CD14-positive monocyte (primary cell): ENCODE measurements at regions of chr6 and their contacts with region 1.

Region 1: DNA sequence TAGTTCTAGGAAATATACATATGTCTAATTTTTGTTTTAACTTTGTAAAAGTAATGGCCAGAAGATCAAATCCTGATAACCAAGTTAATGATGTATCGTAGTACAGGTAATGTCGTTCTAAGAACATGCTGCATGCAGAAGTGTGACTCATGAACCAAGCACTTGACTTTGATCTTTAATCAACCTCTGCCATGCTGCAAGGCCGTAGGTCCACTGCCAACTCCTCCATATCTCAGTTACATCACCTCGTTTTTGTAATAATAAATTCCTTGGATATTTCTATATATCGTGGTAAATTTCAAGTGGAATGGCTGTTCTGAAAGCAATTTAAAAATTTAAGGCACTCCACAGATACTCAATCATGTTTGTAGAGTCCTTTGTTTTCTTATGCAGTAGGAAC is 771.7 kb downstream of the EPHA7 start:
- DNase-seq: no peak
- H3K4me3 ChIP-seq: no peak overlapping the region
- H3K4me3 Mint-ChIP-seq: no peak overlapping the region
- H3K27ac ChIP-seq: no peak overlapping the region
- H3K27ac Mint-ChIP-seq: no peak overlapping the region
- H3K4me1 ChIP-seq: no peaks in the 10 kb centered on the region
- H3K4me1 Mint-ChIP-seq: peaks cover 2% of the 10 kb centered on the region
- H3K27me3 ChIP-seq: no peaks in the 10 kb centered on the region
- H3K27me3 Mint-ChIP-seq: peaks cover 0 to 2% (median 0%) of the 10 kb centered on the region in 3 donors
- CTCF ChIP-seq: no peak

Region 2: DNA sequence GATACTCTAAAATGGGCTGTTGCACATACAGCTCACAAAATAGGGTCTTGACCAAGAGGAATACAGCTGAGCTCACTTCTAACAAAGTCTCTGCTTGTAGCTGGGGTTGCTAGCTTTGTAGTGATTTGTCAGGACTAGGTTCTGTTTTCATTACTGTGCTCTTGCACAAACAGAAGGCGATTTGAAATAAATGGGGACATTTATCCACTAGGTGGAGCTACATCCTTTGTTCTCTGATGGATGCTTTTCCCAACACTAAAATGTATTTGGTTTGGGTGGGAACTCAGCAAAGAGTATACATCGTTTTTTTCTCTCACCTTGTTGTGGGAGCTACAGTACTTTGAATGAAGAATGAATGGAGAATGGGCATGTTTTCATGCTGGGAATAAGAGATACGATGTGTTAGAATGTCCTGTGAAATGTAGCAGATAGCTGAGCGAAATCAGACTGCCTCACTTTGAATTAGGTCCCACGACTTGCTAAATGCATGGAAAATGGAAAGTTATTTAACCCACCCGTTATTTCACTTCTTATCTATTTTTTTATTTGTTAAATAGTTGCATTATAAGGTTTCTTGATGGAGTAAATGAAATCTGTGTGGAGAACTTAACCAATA is 1566.1 kb before region 1 on chr6:
- intact Hi-C with region 1: loop called in 1 of 2 experiments (anchors 5 kb)
- DNase-seq: peak in 1 of 3 donors; percentile 10
- H3K4me3 ChIP-seq: no peak overlapping the region
- H3K4me3 Mint-ChIP-seq: no peak overlapping the region
- H3K27ac ChIP-seq: no peak overlapping the region
- H3K27ac Mint-ChIP-seq: no peak overlapping the region
- H3K4me1 ChIP-seq: no peaks in the 10 kb centered on the region
- H3K4me1 Mint-ChIP-seq: no peaks in the 10 kb centered on the region
- H3K27me3 ChIP-seq: no peaks in the 10 kb centered on the region
- H3K27me3 Mint-ChIP-seq: peaks cover 0 to 2% (median 0%) of the 10 kb centered on the region in 3 donors
- CTCF ChIP-seq: peak; percentile 72

Region 3: DNA sequence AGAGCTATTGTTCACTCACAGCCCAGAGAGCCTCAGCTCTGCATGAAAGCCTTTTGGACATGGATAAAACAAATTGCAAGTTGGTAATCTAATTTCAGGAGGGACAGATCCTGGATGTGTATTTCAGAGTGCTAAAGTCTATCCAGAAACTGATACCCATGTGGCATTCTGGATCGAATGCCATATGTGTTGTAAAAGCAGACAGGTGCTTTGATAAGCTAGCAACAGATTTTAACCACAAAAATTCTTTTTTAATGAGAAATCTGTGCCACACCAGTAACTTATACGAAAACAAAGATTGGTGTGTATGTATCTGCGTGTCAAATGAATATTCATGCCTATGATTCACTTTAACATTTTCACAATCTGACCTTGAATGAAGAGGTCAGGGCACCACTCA is 1124.1 kb before region 1 on chr6:
- intact Hi-C with region 1: no loop called
- DNase-seq: no peak
- H3K4me3 ChIP-seq: no peak overlapping the region
- H3K4me3 Mint-ChIP-seq: no peak overlapping the region
- H3K27ac ChIP-seq: no peak overlapping the region
- H3K27ac Mint-ChIP-seq: no peak overlapping the region
- H3K4me1 ChIP-seq: no peaks in the 10 kb centered on the region
- H3K4me1 Mint-ChIP-seq: no peaks in the 10 kb centered on the region
- H3K27me3 ChIP-seq: no peaks in the 10 kb centered on the region
- H3K27me3 Mint-ChIP-seq: peaks cover 0 to 1% (median 0%) of the 10 kb centered on the region in 3 donors
- CTCF ChIP-seq: no peak

Region 4: GRCh38 chr6:92681401-92681800 is 33.8 kb after region 1 on chr6:
- intact Hi-C with region 1: no loop called
- DNase-seq: no peak
- H3K4me3 ChIP-seq: no peak overlapping the region
- H3K4me3 Mint-ChIP-seq: no peak overlapping the region
- H3K27ac ChIP-seq: no peak overlapping the region
- H3K27ac Mint-ChIP-seq: no peak overlapping the region
- H3K4me1 ChIP-seq: no peaks in the 10 kb centered on the region
- H3K4me1 Mint-ChIP-seq: peaks cover 4% of the 10 kb centered on the region
- H3K27me3 ChIP-seq: no peaks in the 10 kb centered on the region
- H3K27me3 Mint-ChIP-seq: peaks cover 0 to 2% (median 0%) of the 10 kb centered on the region in 3 donors
- CTCF ChIP-seq: no peak